H1 (cell line): ENCODE measurements at regions of chr2 and their contacts with region 1.

Region 1: GRCh38 chr2:101710471-101711318 is 13.2 kb downstream of the MAP4K4 start:
- DNase-seq: no peak
- H3K4me3 ChIP-seq: no peak overlapping the region
- H3K27ac ChIP-seq: no peak overlapping the region
- H3K4me1 ChIP-seq: peaks cover 3 to 18% (median 7%) of the 10 kb centered on the region in 4 experiments; a peak in 5 of 7 replicates
- H3K27me3 ChIP-seq: no peaks in the 10 kb centered on the region
- CTCF ChIP-seq: no peak
- EP300 ChIP-seq: no peak
- POLR2A ChIP-seq: no peak
- RAD21 ChIP-seq: no peak

Region 2: DNA sequence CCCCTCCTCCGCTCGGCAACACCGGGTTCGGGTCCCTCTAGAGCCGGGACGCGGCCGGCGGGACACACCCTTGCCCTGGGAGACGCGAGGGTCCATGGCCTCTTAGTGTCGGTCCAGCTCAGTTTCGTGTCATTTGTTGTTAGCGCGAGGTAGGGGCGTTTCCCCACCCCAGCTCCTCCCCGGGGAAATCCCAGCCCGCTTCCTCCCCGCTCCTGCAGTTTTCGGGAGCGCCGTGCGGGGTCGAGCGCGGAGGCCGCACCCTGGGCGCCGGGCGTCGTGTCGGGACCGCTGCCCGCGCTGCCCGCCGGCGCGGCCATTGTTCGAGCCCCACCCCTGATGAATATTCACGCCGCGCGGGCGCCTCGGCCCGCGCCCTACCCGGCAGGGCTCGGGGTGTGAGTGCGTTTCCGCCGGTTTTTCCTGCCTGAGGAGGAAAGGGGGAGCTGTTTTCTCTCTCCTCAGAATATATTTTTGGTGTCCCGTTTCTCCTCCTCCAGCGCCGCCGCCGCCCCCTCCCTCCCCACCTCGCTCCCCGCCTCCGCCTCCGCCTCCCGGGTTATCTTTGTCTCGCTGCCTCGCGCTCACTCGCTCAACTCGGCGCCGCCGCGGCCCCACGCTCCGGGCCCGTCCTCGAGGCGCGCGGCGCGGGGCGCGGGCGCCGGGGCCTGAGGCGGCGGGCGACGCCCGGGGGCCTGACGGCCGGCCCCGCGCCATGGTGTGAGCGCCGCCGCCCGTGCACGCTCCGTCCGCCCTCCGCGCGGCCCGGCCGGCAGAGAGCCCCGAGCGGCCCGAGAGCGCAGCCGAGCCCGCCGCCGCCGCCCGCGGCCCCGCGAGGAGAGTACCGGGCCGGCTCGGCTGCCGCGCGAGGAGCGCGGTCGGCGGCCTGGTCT is 13.3 kb before region 1 on chr2 and contains the start of gene MAP4K4:
- CTCF ChIA-PET with region 1: interaction called, 4 read pairs
- POLR2A ChIA-PET with region 1: interaction called, 33 read pairs
- DNase-seq: peak; percentile 34 to 79
- H3K4me3 ChIP-seq: peak within 1 kb of the TSS; percentile 86 to 94 (median 92)
- H3K27ac ChIP-seq: peak within 1 kb of the TSS; percentile 60
- H3K4me1 ChIP-seq: peaks cover 4 to 7% (median 7%) of the 10 kb centered on the region in 4 experiments; a peak in 6 of 7 replicates
- H3K27me3 ChIP-seq: 0 out of 7 replicates have a peak, but pooled peaks cover 0 to 2% (median 0%) of the 10 kb centered on the region in 4 experiments
- CTCF ChIP-seq: peak in 2 of 3 experiments; percentile 5 to 8; a peak in 1 of 4 replicates
- EP300 ChIP-seq: no peak
- POLR2A ChIP-seq: peak; percentile 30 to 85
- RAD21 ChIP-seq: no peak; a peak in 1 of 4 replicates
- total RNA-seq, gene MAP4K4: 133 and 138 TPM in 2 replicates

Region 3: DNA sequence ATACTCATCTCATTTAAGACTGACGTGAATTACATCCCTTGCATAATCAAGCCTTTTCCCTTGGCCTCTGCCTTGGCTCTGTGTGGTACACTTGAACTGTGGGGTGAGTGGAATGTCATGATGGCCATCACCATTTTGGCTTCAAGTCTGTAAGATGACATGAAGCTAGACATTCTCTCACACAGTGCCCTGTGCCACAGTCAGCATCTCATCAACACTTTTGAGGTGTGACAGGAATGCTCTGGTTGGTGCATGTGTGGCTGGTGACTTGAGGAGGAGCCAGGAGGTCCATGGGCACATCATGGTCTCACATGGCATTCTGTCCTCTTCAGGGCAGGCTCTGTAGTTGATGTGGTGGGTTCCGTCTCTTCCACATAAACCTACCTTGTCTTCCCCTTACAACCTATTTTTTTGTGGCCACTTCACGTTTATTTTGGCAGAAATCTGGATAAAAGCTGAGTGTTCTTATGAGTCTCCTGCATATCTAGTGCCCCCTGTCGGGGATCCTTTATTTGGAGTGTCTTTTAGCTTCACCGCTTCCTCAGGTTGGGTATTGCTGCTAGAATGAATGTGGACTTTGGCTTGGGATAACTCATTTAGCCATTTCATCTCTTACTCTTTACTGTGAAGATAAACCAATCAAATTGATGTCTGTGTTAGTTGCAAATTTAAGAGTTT is 15.0 kb after region 1 on chr2:
- CTCF ChIA-PET with region 1: interaction called, 14 read pairs
- POLR2A ChIA-PET with region 1: interaction called, 4 read pairs
- DNase-seq: peak in 1 of 2 experiments; percentile 63
- H3K4me3 ChIP-seq: no peak overlapping the region
- H3K27ac ChIP-seq: no peak overlapping the region
- H3K4me1 ChIP-seq: peaks cover 0 to 8% (median 3%) of the 10 kb centered on the region in 4 experiments; a peak in 5 of 7 replicates
- H3K27me3 ChIP-seq: no peaks in the 10 kb centered on the region
- CTCF ChIP-seq: peak in 2 of 3 experiments; percentile 45 to 50; a peak in 3 of 4 replicates
- EP300 ChIP-seq: no peak
- POLR2A ChIP-seq: no peak
- RAD21 ChIP-seq: peak; percentile 60 to 62